PC-9 (cell line): ENCODE measurements at regions of chr15 and their contacts with region 1.

Region 1: GRCh38 chr15:69719527-69720240 is 267.1 kb downstream of the RPLP1 start:
- DNase-seq: no peak
- H3K4me3 ChIP-seq: no peak overlapping the region
- H3K27ac ChIP-seq: no peak overlapping the region
- H3K4me1 ChIP-seq: peaks cover 29% of the 10 kb centered on the region
- H3K27me3 ChIP-seq: no peaks in the 10 kb centered on the region
- CTCF ChIP-seq: no peak

Region 2: GRCh38 chr15:69604072-69604411 is 115.6 kb before region 1 on chr15:
- CTCF ChIA-PET with region 1: interaction called, 3 read pairs
- POLR2A ChIA-PET with region 1: no interaction called
- intact Hi-C with region 1: loop called (anchors 5 kb)
- DNase-seq: peak; percentile 44 to 84
- H3K4me3 ChIP-seq: no peak overlapping the region
- H3K27ac ChIP-seq: no peak overlapping the region
- H3K4me1 ChIP-seq: peaks cover 12% of the 10 kb centered on the region
- H3K27me3 ChIP-seq: 0 out of 2 replicates have a peak, but pooled peaks cover 6% of the 10 kb centered on the region
- CTCF ChIP-seq: peak; percentile 68

Region 3: DNA sequence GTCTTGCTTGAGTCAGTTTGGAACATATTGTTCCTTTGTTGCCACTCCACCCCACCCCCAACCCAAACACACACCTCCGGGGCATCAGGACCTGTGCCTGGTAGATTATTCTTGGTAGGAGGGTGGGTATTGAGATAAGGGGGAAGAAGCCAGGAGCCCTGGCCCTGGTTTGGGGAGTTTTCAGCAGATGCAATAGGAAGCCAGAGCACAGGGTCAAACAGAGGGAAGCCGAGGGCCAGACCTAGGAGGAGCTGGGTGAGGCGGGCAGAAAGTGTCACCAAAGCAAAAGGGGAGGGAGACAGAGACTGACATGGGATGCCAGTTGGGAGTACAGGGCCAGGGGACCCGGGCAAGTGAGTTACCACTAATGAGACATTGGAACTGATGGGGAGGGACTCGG is 103.9 kb before region 1 on chr15:
- CTCF ChIA-PET with region 1: interaction called, 12 read pairs
- POLR2A ChIA-PET with region 1: no interaction called
- intact Hi-C with region 1: no loop called
- DNase-seq: no peak
- H3K4me3 ChIP-seq: no peak overlapping the region
- H3K27ac ChIP-seq: no peak overlapping the region
- H3K4me1 ChIP-seq: no peaks in the 10 kb centered on the region
- H3K27me3 ChIP-seq: no peaks in the 10 kb centered on the region
- CTCF ChIP-seq: no peak